Transverse colon (tissue), 4 donors: ENCODE measurements at regions of chr2 and their contacts with region 1.

Region 1: GRCh38 chr2:171325886-171326585 is 107.8 kb downstream of the METTL8 start:
- DNase-seq: no peak
- H3K4me3 ChIP-seq: no peak overlapping the region
- H3K27ac ChIP-seq: peak overlapping the region in 1 of 4 donors; percentile 24
- H3K4me1 ChIP-seq: peaks cover 0 to 6% (median 2%) of the 10 kb centered on the region in 4 donors
- H3K27me3 ChIP-seq: no peaks in the 10 kb centered on the region
- CTCF ChIP-seq: no peak
- EP300 ChIP-seq: no peak
- POLR2A ChIP-seq: no peak

Region 2: GRCh38 chr2:169386722-169387121 is 1939.3 kb before region 1 on chr2:
- in situ Hi-C with region 1: no loop called
- intact Hi-C with region 1: no loop called
- DNase-seq: no peak
- H3K4me3 ChIP-seq: no peak overlapping the region
- H3K27ac ChIP-seq: no peak overlapping the region
- H3K4me1 ChIP-seq: no peaks in the 10 kb centered on the region
- H3K27me3 ChIP-seq: peaks cover 11% of the 10 kb centered on the region
- CTCF ChIP-seq: no peak
- EP300 ChIP-seq: no peak
- POLR2A ChIP-seq: no peak

Region 3: DNA sequence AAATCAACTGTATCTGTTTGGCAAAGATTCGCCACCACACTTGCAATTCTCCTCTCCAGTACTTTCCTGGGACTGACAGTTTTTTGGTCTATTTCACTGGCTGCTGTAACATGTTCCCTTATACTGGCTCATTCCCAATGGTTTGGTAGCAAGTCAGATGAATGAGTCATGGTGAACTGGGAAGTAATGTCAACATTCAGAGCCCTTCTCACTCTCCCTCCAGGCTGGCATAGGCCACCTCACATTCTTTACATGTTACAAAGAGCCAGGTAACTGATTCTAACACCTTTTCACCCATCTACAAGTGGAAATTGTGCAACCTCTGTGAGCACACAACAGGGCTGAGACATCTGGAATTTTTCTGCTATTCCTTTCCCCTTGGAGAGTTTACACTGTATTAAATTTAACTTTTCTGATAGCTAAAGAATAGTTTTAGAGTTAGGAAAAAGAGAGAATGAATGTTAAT is 54.0 kb before region 1 on chr2:
- in situ Hi-C with region 1: no loop called
- intact Hi-C with region 1: no loop called
- DNase-seq: no peak
- H3K4me3 ChIP-seq: no peak overlapping the region
- H3K27ac ChIP-seq: peak overlapping the region in 3 of 4 donors; percentile 8 to 32 (median 27)
- H3K4me1 ChIP-seq: peaks cover 0 to 5% (median 0%) of the 10 kb centered on the region in 4 donors
- H3K27me3 ChIP-seq: no peaks in the 10 kb centered on the region
- CTCF ChIP-seq: no peak
- EP300 ChIP-seq: no peak
- POLR2A ChIP-seq: no peak

Region 4: DNA sequence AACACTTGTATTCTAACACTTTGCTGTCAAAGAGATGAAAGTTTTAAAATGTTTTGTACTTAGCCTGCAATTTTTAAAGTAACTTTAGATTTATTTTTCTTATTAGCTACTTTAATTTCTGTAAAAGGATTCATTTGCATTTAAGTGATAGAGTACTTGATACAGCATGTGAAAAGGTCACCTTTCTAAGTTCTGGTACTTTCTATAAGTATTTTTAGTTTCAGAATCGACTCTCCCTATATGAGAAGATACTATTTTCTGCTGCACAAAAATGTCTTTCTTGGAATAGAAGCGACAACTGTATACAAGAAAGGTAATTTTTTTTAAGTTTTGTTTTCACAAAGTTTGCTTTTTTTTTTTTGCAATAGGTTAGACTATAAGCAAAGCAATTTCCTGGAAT is 34.9 kb after region 1 on chr2:
- in situ Hi-C with region 1: no loop called
- intact Hi-C with region 1: loop called (anchors 1 kb)
- DNase-seq: no peak
- H3K4me3 ChIP-seq: no peak overlapping the region
- H3K27ac ChIP-seq: no peak overlapping the region
- H3K4me1 ChIP-seq: no peaks in the 10 kb centered on the region
- H3K27me3 ChIP-seq: no peaks in the 10 kb centered on the region
- CTCF ChIP-seq: no peak
- EP300 ChIP-seq: no peak
- POLR2A ChIP-seq: no peak